ENCODE measurements at regions of chr1 and their contacts with region 1.

Region 1: GRCh38 chr1:198612471-198613260 is 26.2 kb upstream of the PTPRC start:
- DNase-seq: peak in 3 of 5 donors; percentile 36 to 48 (median 43)
- H3K4me3 ChIP-seq: peak overlapping the region; percentile 20 to 23
- H3K4me3 Mint-ChIP-seq: peak overlapping the region; percentile 67 to 92 (median 82)
- H3K27ac ChIP-seq: peak overlapping the region; percentile 81
- H3K27ac Mint-ChIP-seq: peak overlapping the region; percentile 92 to 99 (median 98)
- H3K4me1 ChIP-seq: peaks cover 94% of the 10 kb centered on the region
- H3K4me1 Mint-ChIP-seq: peaks cover 58 to 75% (median 64%) of the 10 kb centered on the region in 4 donors
- H3K27me3 ChIP-seq: no peaks in the 10 kb centered on the region
- H3K27me3 Mint-ChIP-seq: no peaks in the 10 kb centered on the region

Region 2: DNA sequence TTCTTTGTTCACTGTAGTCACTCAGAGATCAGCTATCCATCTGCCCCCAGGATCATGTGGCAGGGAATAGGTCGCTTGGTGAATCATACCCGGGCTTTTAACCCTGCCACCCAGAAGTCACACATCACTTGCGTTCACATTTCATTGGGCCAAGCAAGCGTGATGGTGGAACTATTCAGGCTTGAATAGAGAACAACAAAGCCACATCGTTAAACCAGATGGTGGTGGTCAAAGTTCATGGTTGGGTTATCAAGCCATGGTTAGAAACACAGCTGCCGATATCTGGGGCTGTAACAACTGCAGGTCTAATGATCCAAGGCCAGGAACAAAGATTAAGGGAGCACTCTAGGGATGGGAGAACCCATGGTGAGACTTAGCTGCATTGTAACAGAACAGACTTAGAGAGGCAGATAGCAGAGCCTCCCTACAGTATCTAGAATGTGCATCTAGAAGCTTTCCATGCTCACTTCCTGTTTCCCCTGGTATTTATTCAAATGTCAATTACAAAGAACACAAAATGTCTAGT is 13.8 kb before region 1 on chr1:
- CTCF ChIA-PET with region 1: interaction called, 6 read pairs
- POLR2A ChIA-PET with region 1: interaction called, 54 read pairs
- intact Hi-C with region 1: loop called (anchors 2 kb)
- DNase-seq: no peak
- H3K4me3 ChIP-seq: no peak overlapping the region
- H3K4me3 Mint-ChIP-seq: peak overlapping the region; percentile 16 to 78 (median 60)
- H3K27ac ChIP-seq: no peak overlapping the region
- H3K27ac Mint-ChIP-seq: peak overlapping the region in 6 of 7 donors; percentile 69 to 92 (median 78)
- H3K4me1 ChIP-seq: peaks cover 57% of the 10 kb centered on the region
- H3K4me1 Mint-ChIP-seq: peaks cover 48 to 80% (median 63%) of the 10 kb centered on the region in 4 donors
- H3K27me3 ChIP-seq: no peaks in the 10 kb centered on the region
- H3K27me3 Mint-ChIP-seq: no peaks in the 10 kb centered on the region

Region 3: DNA sequence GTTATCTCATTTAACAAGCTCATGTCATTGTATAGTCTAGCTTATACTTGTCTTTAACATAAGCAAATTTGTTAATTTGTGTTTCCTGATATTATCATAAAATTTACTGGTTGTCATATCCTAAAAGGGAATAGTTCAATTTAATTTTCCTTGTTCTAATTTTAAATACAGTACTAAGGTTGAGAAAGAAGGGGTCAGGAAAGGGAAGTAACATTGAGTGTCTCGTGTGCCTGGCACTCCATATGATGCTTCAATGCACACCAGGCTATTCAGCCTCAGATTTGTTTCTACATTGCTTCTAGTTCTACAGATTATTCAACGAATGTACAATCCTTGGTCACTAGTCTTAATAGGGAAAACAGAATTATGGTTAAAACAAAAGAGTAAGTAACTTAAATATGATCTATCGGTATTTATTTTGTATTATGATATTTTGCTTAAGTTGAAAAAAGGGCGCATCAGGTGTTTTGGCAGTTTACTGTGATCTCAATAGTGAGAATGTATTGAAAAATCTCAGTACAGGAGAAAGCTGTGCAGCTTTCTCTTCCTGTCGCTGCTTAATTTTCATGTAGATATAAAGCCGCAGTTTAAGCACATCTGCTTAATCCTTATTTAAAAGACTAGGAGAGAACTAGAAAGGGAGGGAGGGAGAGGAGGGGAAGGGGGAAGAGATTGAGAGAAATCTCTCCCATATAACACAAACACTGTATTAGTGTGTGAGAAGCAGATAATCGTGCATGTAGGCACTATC is 39.2 kb after region 1 on chr1:
- CTCF ChIA-PET with region 1: interaction called, 3 read pairs
- POLR2A ChIA-PET with region 1: interaction called, 19 read pairs
- intact Hi-C with region 1: loop called (anchors 1 kb)
- DNase-seq: no peak
- H3K4me3 ChIP-seq: peak overlapping the region; percentile 12 to 39
- H3K4me3 Mint-ChIP-seq: peak overlapping the region; percentile 70 to 88 (median 78)
- H3K27ac ChIP-seq: peak overlapping the region; percentile 73
- H3K27ac Mint-ChIP-seq: peak overlapping the region; percentile 94 to 98 (median 96)
- H3K4me1 ChIP-seq: peaks cover 91% of the 10 kb centered on the region
- H3K4me1 Mint-ChIP-seq: peaks cover 49 to 73% (median 64%) of the 10 kb centered on the region in 4 donors
- H3K27me3 ChIP-seq: no peaks in the 10 kb centered on the region
- H3K27me3 Mint-ChIP-seq: no peaks in the 10 kb centered on the region

Region 4: GRCh38 chr1:198657550-198658064 is 44.9 kb after region 1 on chr1:
- CTCF ChIA-PET with region 1: interaction called, 3 read pairs
- POLR2A ChIA-PET with region 1: interaction called, 19 read pairs
- intact Hi-C with region 1: loop called (anchors 1 kb)
- DNase-seq: peak; percentile 58 to 73 (median 65)
- H3K4me3 ChIP-seq: peak overlapping the region; percentile 22 to 33
- H3K4me3 Mint-ChIP-seq: peak overlapping the region; percentile 59 to 87 (median 79)
- H3K27ac ChIP-seq: peak overlapping the region; percentile 93
- H3K27ac Mint-ChIP-seq: peak overlapping the region; percentile 96 to 99 (median 98)
- H3K4me1 ChIP-seq: peaks cover 91% of the 10 kb centered on the region
- H3K4me1 Mint-ChIP-seq: peaks cover 43 to 65% (median 58%) of the 10 kb centered on the region in 4 donors
- H3K27me3 ChIP-seq: no peaks in the 10 kb centered on the region
- H3K27me3 Mint-ChIP-seq: no peaks in the 10 kb centered on the region

Region 5: GRCh38 chr1:198809247-198809646 is 196.6 kb after region 1 on chr1:
- CTCF ChIA-PET with region 1: no interaction called
- POLR2A ChIA-PET with region 1: no interaction called
- intact Hi-C with region 1: no loop called
- DNase-seq: no peak
- H3K4me3 ChIP-seq: no peak overlapping the region
- H3K4me3 Mint-ChIP-seq: no peak overlapping the region
- H3K27ac ChIP-seq: no peak overlapping the region
- H3K27ac Mint-ChIP-seq: no peak overlapping the region
- H3K4me1 ChIP-seq: no peaks in the 10 kb centered on the region
- H3K4me1 Mint-ChIP-seq: no peaks in the 10 kb centered on the region
- H3K27me3 ChIP-seq: no peaks in the 10 kb centered on the region
- H3K27me3 Mint-ChIP-seq: peaks cover 0 to 1% of the 10 kb centered on the region in 2 donors